ENCODE measurements at regions of chr20 and their contacts with region 1.

Region 1: DNA sequence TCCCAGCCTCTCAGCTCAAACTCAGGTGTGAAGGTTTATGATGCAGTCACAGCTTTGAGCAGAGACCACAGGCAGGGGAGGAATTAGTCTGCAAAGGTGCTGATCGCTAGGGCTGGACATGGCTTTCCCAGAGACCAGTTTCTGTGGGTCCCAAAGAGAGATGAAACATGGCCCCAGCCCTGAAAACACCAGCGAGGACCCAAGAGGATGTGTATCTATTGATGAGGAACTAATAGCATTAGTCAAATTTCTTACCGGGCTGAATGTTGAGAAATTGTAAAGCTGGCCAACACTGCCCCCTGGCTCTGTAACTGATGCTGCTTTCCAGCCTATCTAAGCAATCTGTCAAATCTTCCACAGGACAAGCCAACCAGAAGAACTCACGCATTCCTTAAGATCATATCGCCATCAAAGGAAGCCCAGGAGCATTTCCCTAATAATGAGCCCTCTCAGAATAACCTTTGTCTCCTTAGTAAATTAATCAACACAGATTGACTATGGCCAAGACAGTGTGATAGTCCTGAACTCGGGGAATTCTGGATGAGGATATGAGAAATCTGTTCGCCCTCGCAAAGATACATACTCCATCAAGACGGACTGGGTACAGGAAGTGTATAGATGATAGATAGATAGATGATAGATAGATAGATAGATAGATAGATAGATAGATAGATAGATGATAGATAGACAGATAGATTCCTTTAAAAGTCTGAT is 7.8 kb upstream of the ACSS1 start:
- DNase-seq: peak in 3 of 4 donors; percentile 44 to 71 (median 59)
- ATAC-seq: peak; percentile 94
- H3K4me3 ChIP-seq: no peak overlapping the region
- H3K27ac ChIP-seq: no peak overlapping the region
- H3K4me1 ChIP-seq: no peaks in the 10 kb centered on the region
- H3K27me3 ChIP-seq: peaks cover 5 to 14% of the 10 kb centered on the region in 2 donors
- CTCF ChIP-seq: peak; percentile 67 to 84

Region 2: GRCh38 chr20:24965065-24965929 is 100.5 kb before region 1 on chr20:
- intact Hi-C with region 1: no loop called
- DNase-seq: no peak
- ATAC-seq: no peak
- H3K4me3 ChIP-seq: no peak overlapping the region
- H3K27ac ChIP-seq: no peak overlapping the region
- H3K4me1 ChIP-seq: no peaks in the 10 kb centered on the region
- H3K27me3 ChIP-seq: no peaks in the 10 kb centered on the region
- CTCF ChIP-seq: no peak

Region 3: GRCh38 chr20:24992487-24993205 is 73.1 kb before region 1 on chr20 and contains the start of gene APMAP:
- intact Hi-C with region 1: loop called (anchors 2 to 5 kb)
- DNase-seq: peak; percentile 96 to 99 (median 96)
- ATAC-seq: peak; percentile 97
- H3K4me3 ChIP-seq: peak within 1 kb of the TSS; percentile 89 to 95
- H3K27ac ChIP-seq: peak within 1 kb of the TSS; percentile 93 to 96
- H3K4me1 ChIP-seq: peaks cover 11 to 65% of the 10 kb centered on the region in 2 donors
- H3K27me3 ChIP-seq: no peaks in the 10 kb centered on the region
- CTCF ChIP-seq: no peak
- polyA plus RNA-seq, gene APMAP: 76.2 to 90.2 (median 83.3) TPM

Region 4: GRCh38 chr20:25116739-25117458 is 51.1 kb after region 1 on chr20:
- intact Hi-C with region 1: no loop called
- DNase-seq: no peak
- ATAC-seq: no peak
- H3K4me3 ChIP-seq: no peak overlapping the region
- H3K27ac ChIP-seq: no peak overlapping the region
- H3K4me1 ChIP-seq: no peaks in the 10 kb centered on the region
- H3K27me3 ChIP-seq: peaks cover 0 to 12% of the 10 kb centered on the region in 2 donors
- CTCF ChIP-seq: no peak

Measured in left lung (tissue), 14 donors.